Activated CD4-positive, alpha-beta T cell treated with anti-CD3 and anti-CD28 coated beads for 36 hours (primary cell): ENCODE measurements at regions of chr19 and their contacts with region 1.

Region 1: DNA sequence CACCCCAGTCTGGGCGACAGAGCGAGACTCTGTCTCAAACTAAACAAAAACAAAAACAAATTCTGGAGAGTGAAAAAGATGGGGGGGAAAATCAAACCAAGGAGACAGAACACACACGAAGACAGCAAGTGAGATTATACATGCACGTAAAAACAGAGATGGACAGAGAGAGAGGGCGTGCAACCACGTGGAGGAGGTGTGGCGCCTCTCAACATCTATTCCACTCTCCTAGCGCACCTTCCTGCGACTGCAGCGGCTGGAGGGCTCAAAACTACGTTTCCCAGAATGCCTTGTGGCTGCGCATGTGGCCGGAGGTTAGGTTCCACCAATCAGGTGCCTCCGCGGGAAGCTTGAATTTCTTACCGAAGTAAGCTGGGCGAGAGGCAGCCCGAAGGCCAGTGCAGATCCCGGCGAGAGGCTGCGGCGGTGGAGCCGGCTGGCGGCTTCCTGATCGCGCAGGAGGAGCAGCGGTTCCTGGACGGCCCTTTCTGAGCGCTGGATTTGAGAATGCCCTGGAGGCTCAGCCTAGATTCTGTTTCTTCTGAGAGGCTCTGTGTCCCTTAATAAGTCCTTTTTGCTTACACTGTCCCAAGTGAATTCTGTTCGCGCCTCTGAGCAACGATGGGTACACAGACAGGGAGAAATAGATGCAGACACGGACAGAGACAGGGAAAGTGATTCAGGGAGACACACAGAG is 13.1 kb upstream of the NANOS2 start:
- DNase-seq: peak; percentile 96
- ATAC-seq: peak; percentile 100
- H3K4me3 Mint-ChIP-seq: peak overlapping the region; percentile 56
- H3K27ac Mint-ChIP-seq: peak overlapping the region; percentile 68
- H3K4me1 Mint-ChIP-seq: peaks cover 12% of the 10 kb centered on the region
- H3K27me3 Mint-ChIP-seq: peaks cover 7% of the 10 kb centered on the region

Region 2: GRCh38 chr19:45902651-45903625 is 24.8 kb before region 1 on chr19:
- CTCF ChIA-PET with region 1: interaction called, 3 read pairs
- POLR2A ChIA-PET with region 1: no interaction called
- intact Hi-C with region 1: loop called in 1 of 2 experiments (anchors 1 kb)
- DNase-seq: peak; percentile 100
- ATAC-seq: peak; percentile 88
- H3K4me3 Mint-ChIP-seq: peak overlapping the region; percentile 88
- H3K27ac Mint-ChIP-seq: peak overlapping the region; percentile 75
- H3K4me1 Mint-ChIP-seq: peaks cover 16% of the 10 kb centered on the region
- H3K27me3 Mint-ChIP-seq: no peaks in the 10 kb centered on the region